ENCODE measurements at regions of chr4 and their contacts with region 1.

Region 1: GRCh38 chr4:174873931-174874330 is 44.2 kb upstream of the ADAM29 start:
- DNase-seq: peak; percentile 51
- H3K4me3 Mint-ChIP-seq: no peak overlapping the region
- H3K27ac Mint-ChIP-seq: peak overlapping the region; percentile 42
- H3K4me1 Mint-ChIP-seq: peaks cover 40% of the 10 kb centered on the region
- H3K27me3 Mint-ChIP-seq: no peaks in the 10 kb centered on the region
- CTCF ChIP-seq: no peak

Region 2: GRCh38 chr4:174365018-174365587 is 508.8 kb before region 1 on chr4:
- CTCF ChIA-PET with region 1: no interaction called
- intact Hi-C with region 1: loop called (anchors 10 kb)
- DNase-seq: peak; percentile 42
- H3K4me3 Mint-ChIP-seq: no peak overlapping the region
- H3K27ac Mint-ChIP-seq: no peak overlapping the region
- H3K4me1 Mint-ChIP-seq: no peaks in the 10 kb centered on the region
- H3K27me3 Mint-ChIP-seq: no peaks in the 10 kb centered on the region
- CTCF ChIP-seq: peak; percentile 21

Region 3: DNA sequence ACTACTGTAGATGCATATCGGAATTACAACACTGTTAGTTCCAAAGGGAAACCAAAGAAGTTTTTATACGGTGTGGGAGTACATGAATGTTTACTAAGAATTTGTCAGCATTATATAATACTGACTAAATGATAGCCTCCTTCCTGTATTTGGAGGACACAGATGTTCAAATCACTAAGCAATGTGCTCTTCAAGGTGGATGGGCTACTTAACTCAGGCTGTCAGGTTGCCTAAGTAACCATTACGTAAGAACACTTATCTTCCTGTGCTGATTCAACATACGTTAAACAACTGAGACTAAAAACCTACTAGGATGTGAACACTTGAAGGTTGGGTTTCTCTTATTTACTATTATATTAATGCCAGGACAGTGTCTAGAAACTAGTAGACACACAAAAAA is 269.7 kb before region 1 on chr4:
- CTCF ChIA-PET with region 1: no interaction called
- intact Hi-C with region 1: no loop called
- DNase-seq: no peak
- H3K4me3 Mint-ChIP-seq: no peak overlapping the region
- H3K27ac Mint-ChIP-seq: no peak overlapping the region
- H3K4me1 Mint-ChIP-seq: no peaks in the 10 kb centered on the region
- H3K27me3 Mint-ChIP-seq: no peaks in the 10 kb centered on the region
- CTCF ChIP-seq: no peak

Region 4: GRCh38 chr4:174764105-174764729 is 109.7 kb before region 1 on chr4:
- CTCF ChIA-PET with region 1: no interaction called
- intact Hi-C with region 1: loop called (anchors 5 kb)
- DNase-seq: no peak
- H3K4me3 Mint-ChIP-seq: no peak overlapping the region
- H3K27ac Mint-ChIP-seq: peak overlapping the region; percentile 44
- H3K4me1 Mint-ChIP-seq: no peaks in the 10 kb centered on the region
- H3K27me3 Mint-ChIP-seq: no peaks in the 10 kb centered on the region
- CTCF ChIP-seq: no peak

Region 5: DNA sequence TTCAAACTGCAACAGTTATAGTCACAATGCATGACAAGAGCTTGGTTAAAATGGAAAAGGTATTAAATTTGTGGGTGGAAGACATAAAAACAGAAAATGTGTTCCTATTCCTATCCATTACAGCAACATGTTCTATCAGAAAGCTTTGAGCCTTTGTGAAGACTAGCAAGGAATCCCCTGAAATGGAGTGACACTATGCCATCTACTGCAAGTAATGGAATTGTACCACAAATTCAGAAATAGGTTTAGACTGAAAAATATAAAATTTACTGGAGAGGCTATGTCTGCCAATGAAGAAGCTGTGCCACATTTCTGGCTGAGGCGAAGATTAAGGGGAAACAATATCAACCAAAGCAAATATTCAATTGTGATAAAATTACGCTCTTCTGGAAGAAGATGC is 292.1 kb after region 1 on chr4:
- CTCF ChIA-PET with region 1: no interaction called
- intact Hi-C with region 1: loop called (anchors 5 kb)
- DNase-seq: no peak
- H3K4me3 Mint-ChIP-seq: no peak overlapping the region
- H3K27ac Mint-ChIP-seq: no peak overlapping the region
- H3K4me1 Mint-ChIP-seq: no peaks in the 10 kb centered on the region
- H3K27me3 Mint-ChIP-seq: no peaks in the 10 kb centered on the region
- CTCF ChIP-seq: no peak

Region 6: GRCh38 chr4:175253184-175253902 is 379.4 kb after region 1 on chr4:
- CTCF ChIA-PET with region 1: no interaction called
- intact Hi-C with region 1: loop called (anchors 5 kb)
- DNase-seq: no peak
- H3K4me3 Mint-ChIP-seq: no peak overlapping the region
- H3K27ac Mint-ChIP-seq: no peak overlapping the region
- H3K4me1 Mint-ChIP-seq: no peaks in the 10 kb centered on the region
- H3K27me3 Mint-ChIP-seq: no peaks in the 10 kb centered on the region
- CTCF ChIP-seq: peak; percentile 26

Region 7: GRCh38 chr4:175459571-175459970 is 585.6 kb after region 1 on chr4:
- CTCF ChIA-PET with region 1: no interaction called
- intact Hi-C with region 1: loop called (anchors 10 kb)
- DNase-seq: no peak
- H3K4me3 Mint-ChIP-seq: no peak overlapping the region
- H3K27ac Mint-ChIP-seq: peak overlapping the region; percentile 9
- H3K4me1 Mint-ChIP-seq: peaks cover 10% of the 10 kb centered on the region
- H3K27me3 Mint-ChIP-seq: no peaks in the 10 kb centered on the region
- CTCF ChIP-seq: no peak

Region 8: DNA sequence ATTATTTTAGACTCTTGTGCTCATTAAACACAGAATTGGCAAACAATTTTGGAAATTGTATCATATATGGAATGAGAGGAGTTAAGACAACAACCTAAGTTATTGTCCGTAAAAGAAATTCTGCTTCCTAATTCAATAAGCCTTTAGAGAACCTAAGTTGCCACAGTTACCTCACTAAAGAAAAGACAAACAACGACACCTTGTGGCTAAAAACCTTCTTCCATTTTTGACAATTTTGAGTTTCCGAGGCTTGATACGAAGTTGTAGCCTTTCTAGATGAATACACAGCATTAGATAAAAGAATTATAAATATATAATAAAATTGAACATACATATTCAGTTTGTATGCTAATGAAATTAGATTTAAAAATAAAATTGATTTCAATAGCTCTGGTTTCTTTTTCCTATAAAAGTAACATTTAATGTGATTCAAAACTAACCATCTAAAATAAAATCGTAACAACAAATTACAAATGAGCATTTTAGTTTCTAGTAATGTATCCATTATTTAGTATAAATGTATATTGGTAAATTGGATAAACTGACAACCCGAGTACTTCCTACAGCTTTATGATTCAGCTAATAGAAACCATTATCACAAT is 663.0 kb after region 1 on chr4:
- CTCF ChIA-PET with region 1: no interaction called
- intact Hi-C with region 1: loop called (anchors 2 kb)
- DNase-seq: peak; percentile 6
- H3K4me3 Mint-ChIP-seq: no peak overlapping the region
- H3K27ac Mint-ChIP-seq: no peak overlapping the region
- H3K4me1 Mint-ChIP-seq: peaks cover 12% of the 10 kb centered on the region
- H3K27me3 Mint-ChIP-seq: no peaks in the 10 kb centered on the region
- CTCF ChIP-seq: no peak